ENCODE measurements at regions of chr17 and their contacts with region 1.

Region 1: DNA sequence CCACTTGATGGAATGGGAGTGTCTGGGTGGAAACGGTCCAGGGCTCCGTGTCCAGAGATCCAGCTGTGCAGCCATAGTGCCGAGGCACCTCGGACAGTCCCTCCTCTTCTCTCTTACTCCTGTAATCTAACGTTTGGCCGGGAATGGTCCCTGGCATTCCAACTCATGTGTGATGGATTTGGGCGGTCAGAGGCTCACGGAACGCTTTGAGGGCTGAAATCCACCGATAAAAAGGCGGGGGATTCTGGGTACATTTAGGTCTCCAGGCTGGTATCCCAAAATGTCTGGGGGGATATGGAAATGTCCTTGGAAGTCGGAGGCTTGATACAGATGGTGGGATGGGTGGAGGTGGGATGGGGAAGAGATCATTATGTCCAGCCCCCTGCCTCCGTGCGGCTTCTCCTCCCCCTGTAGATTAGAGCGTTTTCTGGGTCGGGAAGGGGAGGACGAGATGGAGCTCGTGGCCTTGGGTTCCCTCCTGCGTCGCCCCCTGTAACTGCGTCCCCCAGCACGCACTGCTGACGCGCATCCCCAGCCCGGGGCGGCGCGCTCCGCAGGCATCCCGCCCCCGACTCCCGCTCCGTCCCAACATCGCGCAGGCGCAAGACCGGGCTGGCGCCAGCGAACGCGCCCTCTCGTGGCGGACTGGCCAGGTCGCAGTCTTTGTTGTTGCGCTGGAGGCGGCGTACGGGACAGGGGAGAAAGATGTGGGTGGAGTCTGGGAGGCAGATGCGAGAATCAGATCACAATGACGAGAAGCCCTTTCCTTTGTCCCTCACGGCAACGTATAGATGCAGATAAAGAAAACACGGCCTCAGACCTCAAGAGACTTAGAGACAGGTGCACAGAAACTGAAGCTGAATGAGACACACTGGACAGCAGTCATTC is 4.5 kb upstream of the SGCA start:
- DNase-seq: peak; percentile 90 to 96
- H3K4me3 ChIP-seq: peak overlapping the region; percentile 49 to 58
- H3K27ac ChIP-seq: peak overlapping the region; percentile 77
- H3K4me1 ChIP-seq: peaks cover 0 to 42% (median 25%) of the 10 kb centered on the region in 4 donors
- H3K27me3 ChIP-seq: no peaks in the 10 kb centered on the region
- CTCF ChIP-seq: peak; percentile 95 to 99

Region 2: DNA sequence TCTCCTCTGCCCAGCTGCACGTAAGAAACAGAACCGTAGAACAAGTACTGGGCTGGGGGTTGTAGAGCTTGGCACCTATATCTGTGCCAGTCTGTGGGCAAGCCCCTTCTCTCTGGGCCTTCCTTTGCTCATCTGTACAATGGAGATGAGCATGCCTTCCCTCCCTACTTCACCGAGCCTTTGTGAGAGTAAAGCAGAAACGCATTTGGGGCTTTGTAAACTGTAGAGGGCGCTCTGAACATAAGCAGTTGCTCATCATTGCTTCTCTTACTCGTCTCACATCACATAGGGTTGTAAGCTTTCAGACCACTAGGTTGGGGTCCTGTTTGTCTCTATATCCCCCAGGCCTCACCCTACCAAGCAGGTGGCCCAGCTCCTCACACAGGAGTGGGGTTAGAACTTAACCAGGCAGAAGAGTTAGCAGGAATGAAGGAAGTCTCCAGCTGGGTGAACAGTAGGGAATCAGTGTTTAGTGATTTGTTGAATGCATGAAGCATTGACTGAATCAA is 46.4 kb before region 1 on chr17:
- intact Hi-C with region 1: loop called (anchors 10 kb)
- DNase-seq: no peak
- H3K4me3 ChIP-seq: no peak overlapping the region
- H3K27ac ChIP-seq: no peak overlapping the region
- H3K4me1 ChIP-seq: peaks cover 13 to 46% (median 37%) of the 10 kb centered on the region in 4 donors
- H3K27me3 ChIP-seq: no peaks in the 10 kb centered on the region
- CTCF ChIP-seq: peak; percentile 43 to 46

Region 3: GRCh38 chr17:50139950-50140871 is 21.1 kb before region 1 on chr17:
- intact Hi-C with region 1: loop called (anchors 2 kb)
- DNase-seq: peak; percentile 78 to 89
- H3K4me3 ChIP-seq: no peak overlapping the region
- H3K27ac ChIP-seq: peak overlapping the region; percentile 50 to 55
- H3K4me1 ChIP-seq: peaks cover 0 to 13% (median 6%) of the 10 kb centered on the region in 4 donors
- H3K27me3 ChIP-seq: no peaks in the 10 kb centered on the region
- CTCF ChIP-seq: peak; percentile 93 to 97